OCI-LY7 (cell line): ENCODE measurements at regions of chr3 and their contacts with region 1.

Region 1: DNA sequence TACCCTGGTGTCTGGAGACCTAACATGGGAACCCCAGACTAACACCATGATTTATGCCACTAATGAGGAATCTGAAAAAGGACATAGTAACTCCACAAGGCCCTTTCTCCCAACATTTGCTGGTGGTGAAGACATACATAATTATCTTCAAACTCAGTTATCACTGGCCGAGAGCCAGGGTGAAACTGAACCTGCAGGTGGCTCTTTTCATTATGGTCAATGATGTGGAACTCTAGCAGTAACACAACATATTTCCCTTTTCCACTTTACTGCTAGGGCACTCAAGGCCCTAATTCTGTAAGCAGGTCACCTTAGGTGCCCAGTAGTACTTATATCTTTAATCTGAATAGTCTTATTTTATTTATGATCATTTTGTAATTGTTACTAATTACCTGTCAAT is 326.4 kb upstream of the SATB1 start:
- DNase-seq: peak; percentile 91
- H3K4me3 ChIP-seq: peak overlapping the region; percentile 45
- H3K27ac ChIP-seq: peak overlapping the region; percentile 91
- H3K4me1 ChIP-seq: peaks cover 72% of the 10 kb centered on the region
- CTCF ChIP-seq: no peak

Region 2: GRCh38 chr3:18740631-18741583 is 10.6 kb before region 1 on chr3:
- CTCF ChIA-PET with region 1: no interaction called
- POLR2A ChIA-PET with region 1: interaction called, 27 read pairs
- intact Hi-C with region 1: no loop called
- DNase-seq: peak; percentile 76
- H3K4me3 ChIP-seq: peak overlapping the region; percentile 60
- H3K27ac ChIP-seq: peak overlapping the region; percentile 91
- H3K4me1 ChIP-seq: peaks cover 73% of the 10 kb centered on the region
- CTCF ChIP-seq: no peak

Region 3: DNA sequence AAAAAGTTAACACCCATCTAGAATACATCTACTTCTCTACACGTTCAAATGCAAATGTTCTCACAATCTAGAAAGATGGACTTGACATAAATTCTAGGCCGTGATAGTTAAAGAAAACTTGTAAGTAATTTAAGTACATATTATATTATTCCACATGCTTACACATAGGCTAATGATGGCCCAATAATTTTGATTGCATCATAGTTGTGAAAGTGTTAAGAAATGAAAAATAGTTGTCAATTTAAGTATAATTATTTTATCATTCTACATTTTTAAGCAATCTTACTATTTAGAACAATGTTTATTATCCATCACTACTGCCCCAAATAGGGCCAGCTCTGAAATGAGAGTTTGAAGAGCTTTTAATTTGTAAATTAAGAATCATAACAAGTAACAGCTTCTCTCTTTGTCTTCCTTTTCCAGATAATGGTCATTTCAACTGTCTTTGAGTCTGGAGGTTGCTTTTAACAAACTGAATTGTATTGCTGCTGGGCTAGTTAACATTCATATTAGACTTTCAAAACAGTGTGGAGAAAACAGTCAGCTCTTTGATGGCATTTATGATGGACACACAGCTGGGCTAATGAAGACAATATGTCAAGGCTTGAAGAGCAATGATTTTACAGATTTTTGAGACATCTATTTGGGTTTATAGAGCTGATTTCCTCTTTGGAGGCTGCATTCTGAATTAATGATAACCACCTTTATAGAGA is 150.7 kb after region 1 on chr3:
- CTCF ChIA-PET with region 1: no interaction called
- POLR2A ChIA-PET with region 1: no interaction called
- intact Hi-C with region 1: no loop called
- DNase-seq: no peak
- H3K4me3 ChIP-seq: no peak overlapping the region
- H3K27ac ChIP-seq: no peak overlapping the region
- H3K4me1 ChIP-seq: peaks cover 43% of the 10 kb centered on the region
- CTCF ChIP-seq: no peak